HEK293 (cell line): ENCODE measurements at regions of chr11 and their contacts with region 1.

Region 1: GRCh38 chr11:76919887-76920746 is 59.4 kb downstream of the ACER3 start:
- H3K4me3 ChIP-seq: no peak overlapping the region
- H3K27ac ChIP-seq: no peak overlapping the region
- H3K4me1 ChIP-seq: no peaks in the 10 kb centered on the region
- CTCF ChIP-seq: peak; percentile 70

Region 2: GRCh38 chr11:76524919-76525318 is 395.2 kb before region 1 on chr11:
- CTCF ChIA-PET with region 1: no interaction called
- POLR2A ChIA-PET with region 1: no interaction called
- H3K4me3 ChIP-seq: no peak overlapping the region
- H3K27ac ChIP-seq: no peak overlapping the region
- H3K4me1 ChIP-seq: peaks cover 2% of the 10 kb centered on the region; the same call in 1 of the 2 replicates
- CTCF ChIP-seq: no peak

Region 3: DNA sequence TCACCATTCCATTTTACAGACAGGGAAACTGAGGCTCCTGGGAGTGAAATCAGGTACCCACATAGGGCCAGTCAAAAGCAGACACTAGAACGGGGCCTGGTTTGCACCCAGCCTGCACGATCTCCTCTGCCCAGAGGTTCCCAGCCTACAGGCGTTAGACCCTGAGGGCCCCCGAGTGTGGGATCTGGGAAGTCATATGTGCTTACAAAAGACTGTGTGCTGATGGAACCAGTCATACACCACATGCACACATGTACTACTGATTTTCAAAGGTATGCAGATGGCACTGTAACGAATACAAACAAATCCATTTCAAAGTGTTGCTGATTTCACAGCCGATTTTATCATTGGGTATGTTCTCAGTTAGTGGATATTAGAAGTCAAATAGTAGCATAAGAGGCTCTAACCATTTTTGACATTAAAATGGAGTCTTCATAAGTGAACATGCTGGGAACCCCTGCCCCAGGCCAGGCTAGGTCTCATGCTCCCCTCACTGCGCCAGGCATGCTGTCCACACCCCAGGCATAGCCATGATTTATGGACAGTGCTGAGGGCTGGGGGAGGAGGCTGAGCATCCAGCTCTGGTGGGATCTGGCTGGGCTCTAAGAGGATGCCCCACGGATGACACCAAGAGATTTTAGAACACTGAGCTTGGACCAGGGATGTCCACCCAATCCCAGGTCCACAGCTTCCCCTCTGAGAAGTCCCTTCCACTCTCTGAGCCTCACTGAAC is 211.0 kb before region 1 on chr11:
- CTCF ChIA-PET with region 1: no interaction called
- POLR2A ChIA-PET with region 1: no interaction called
- H3K4me3 ChIP-seq: no peak overlapping the region
- H3K27ac ChIP-seq: no peak overlapping the region
- H3K4me1 ChIP-seq: no peaks in the 10 kb centered on the region
- CTCF ChIP-seq: no peak

Region 4: GRCh38 chr11:76721755-76722677 is 198.1 kb before region 1 on chr11:
- CTCF ChIA-PET with region 1: interaction called, 42 read pairs
- POLR2A ChIA-PET with region 1: no interaction called
- H3K4me3 ChIP-seq: no peak overlapping the region
- H3K27ac ChIP-seq: no peak overlapping the region
- H3K4me1 ChIP-seq: no peaks in the 10 kb centered on the region
- CTCF ChIP-seq: peak; percentile 69

Region 5: GRCh38 chr11:76807206-76807875 is 112.8 kb before region 1 on chr11:
- CTCF ChIA-PET with region 1: interaction called, 139 read pairs
- POLR2A ChIA-PET with region 1: no interaction called
- H3K4me3 ChIP-seq: no peak overlapping the region
- H3K27ac ChIP-seq: no peak overlapping the region
- H3K4me1 ChIP-seq: no peaks in the 10 kb centered on the region
- CTCF ChIP-seq: peak; percentile 74

Region 6: GRCh38 chr11:76880314-76880713 is 39.8 kb before region 1 on chr11:
- CTCF ChIA-PET with region 1: interaction called, 10 read pairs
- POLR2A ChIA-PET with region 1: no interaction called
- H3K4me3 ChIP-seq: no peak overlapping the region
- H3K27ac ChIP-seq: no peak overlapping the region
- H3K4me1 ChIP-seq: no peaks in the 10 kb centered on the region
- CTCF ChIP-seq: no peak

Region 7: GRCh38 chr11:76939211-76939631 is 19.1 kb after region 1 on chr11:
- CTCF ChIA-PET with region 1: interaction called, 34 read pairs
- POLR2A ChIA-PET with region 1: no interaction called
- H3K4me3 ChIP-seq: no peak overlapping the region
- H3K27ac ChIP-seq: no peak overlapping the region
- H3K4me1 ChIP-seq: no peaks in the 10 kb centered on the region
- CTCF ChIP-seq: no peak

Region 8: DNA sequence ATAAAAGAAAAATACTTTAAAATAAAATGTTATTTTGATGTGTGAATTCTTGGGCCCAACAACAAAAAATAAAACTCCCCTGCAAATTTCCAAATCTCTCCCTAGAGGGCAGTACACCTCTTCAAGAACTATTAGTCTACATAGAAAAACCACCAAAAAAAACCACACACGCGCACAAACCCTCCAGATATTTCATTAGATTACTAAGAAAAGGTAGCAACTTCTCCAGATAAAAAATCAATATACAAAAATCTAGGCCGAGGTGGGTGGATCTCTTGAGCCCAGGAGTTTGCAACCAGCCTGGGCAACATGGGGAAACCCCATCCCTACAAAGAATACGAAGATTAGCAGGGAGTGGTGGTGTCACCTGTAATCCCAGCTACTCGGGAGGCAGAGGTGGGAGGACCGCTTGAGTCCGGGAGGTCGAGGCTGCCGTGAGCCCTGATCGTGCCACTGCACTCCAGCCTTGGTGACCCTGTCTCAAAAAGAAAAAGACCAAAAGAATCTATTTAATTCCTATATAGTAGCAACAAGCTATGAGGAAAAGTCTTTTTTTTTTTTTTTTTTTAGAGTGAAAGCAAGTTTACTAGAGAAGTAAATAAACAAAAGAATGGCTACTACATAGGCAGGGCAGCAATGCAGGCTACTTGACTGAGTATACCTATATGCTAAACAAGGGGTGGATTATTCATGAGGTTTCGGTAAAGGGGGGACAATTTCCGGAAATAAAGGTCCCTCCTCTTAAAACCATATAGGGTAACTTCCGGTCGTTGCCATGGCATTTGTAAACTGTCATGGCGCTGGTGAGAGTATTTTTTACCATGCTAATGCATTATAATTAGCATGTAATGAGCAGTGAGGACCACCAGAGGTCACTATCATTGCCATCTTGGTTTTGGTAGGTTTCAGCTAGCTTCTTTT is 127.2 kb after region 1 on chr11:
- CTCF ChIA-PET with region 1: interaction called, 45 read pairs
- POLR2A ChIA-PET with region 1: no interaction called
- H3K4me3 ChIP-seq: peak overlapping the region; percentile 36
- H3K27ac ChIP-seq: no peak overlapping the region
- H3K4me1 ChIP-seq: no peaks in the 10 kb centered on the region
- CTCF ChIP-seq: peak; percentile 54

Region 9: GRCh38 chr11:77202941-77203900 is 283.1 kb after region 1 on chr11:
- CTCF ChIA-PET with region 1: no interaction called
- POLR2A ChIA-PET with region 1: no interaction called
- H3K4me3 ChIP-seq: no peak overlapping the region
- H3K27ac ChIP-seq: no peak overlapping the region
- H3K4me1 ChIP-seq: no peaks in the 10 kb centered on the region
- CTCF ChIP-seq: no peak

Region 10: DNA sequence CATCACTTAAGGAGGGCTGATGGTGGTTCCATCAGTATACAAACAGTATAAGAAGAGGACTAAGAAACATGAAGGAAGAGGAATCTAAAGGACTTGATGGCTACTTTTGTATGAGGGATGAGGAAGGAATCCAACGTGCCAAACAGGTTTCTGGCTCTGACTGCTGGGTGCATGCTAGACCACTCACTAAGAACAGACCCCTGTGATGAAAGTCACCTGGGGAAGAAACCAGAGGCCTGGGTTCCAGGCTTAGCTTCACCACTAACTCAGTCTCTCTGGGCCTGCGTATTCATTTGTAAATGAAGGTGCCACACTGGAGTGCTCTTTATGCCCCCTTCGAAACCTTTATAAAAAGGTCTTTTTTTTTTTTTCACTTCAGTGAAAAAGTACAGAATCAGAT is 955.9 kb after region 1 on chr11:
- CTCF ChIA-PET with region 1: no interaction called
- POLR2A ChIA-PET with region 1: no interaction called
- H3K4me3 ChIP-seq: no peak overlapping the region
- H3K27ac ChIP-seq: no peak overlapping the region
- H3K4me1 ChIP-seq: no peaks in the 10 kb centered on the region
- CTCF ChIP-seq: no peak